ENCODE measurements at regions of chr1 and their contacts with region 1.

Region 1: GRCh38 chr1:167200749-167201148 is 19.9 kb upstream of the POU2F1 start:
- H3K4me3 Mint-ChIP-seq: no peak overlapping the region
- H3K27ac Mint-ChIP-seq: no peak overlapping the region
- H3K4me1 Mint-ChIP-seq: no peaks in the 10 kb centered on the region
- H3K27me3 Mint-ChIP-seq: no peaks in the 10 kb centered on the region

Region 2: GRCh38 chr1:167185974-167186657 is 14.6 kb before region 1 on chr1:
- intact Hi-C with region 1: loop called (anchors 1 kb)
- H3K4me3 Mint-ChIP-seq: no peak overlapping the region
- H3K27ac Mint-ChIP-seq: no peak overlapping the region
- H3K4me1 Mint-ChIP-seq: no peaks in the 10 kb centered on the region
- H3K27me3 Mint-ChIP-seq: no peaks in the 10 kb centered on the region

Region 3: DNA sequence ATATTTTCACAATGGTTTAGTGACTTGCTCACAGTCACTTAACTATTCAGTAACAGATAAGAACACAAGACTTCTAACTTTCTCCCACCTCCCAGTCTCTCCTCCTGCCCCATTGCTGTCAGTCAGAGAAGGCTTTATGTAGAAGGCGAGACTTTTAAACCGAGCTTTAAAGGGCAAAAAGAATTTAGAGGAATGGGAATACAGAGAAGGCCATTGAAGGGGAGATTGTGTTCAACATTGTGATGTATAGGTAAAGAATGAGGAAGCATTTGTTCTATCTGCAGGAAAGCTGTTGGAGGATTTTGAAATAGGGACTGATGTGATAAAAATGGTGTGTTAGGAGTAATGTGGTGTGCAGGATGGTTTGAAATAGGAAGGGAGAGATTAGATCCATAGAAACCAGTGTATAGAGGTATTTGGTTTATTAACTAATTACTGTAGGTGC is 27.2 kb after region 1 on chr1:
- intact Hi-C with region 1: no loop called
- H3K4me3 Mint-ChIP-seq: no peak overlapping the region
- H3K27ac Mint-ChIP-seq: peak overlapping the region; percentile 45
- H3K4me1 Mint-ChIP-seq: peaks cover 54% of the 10 kb centered on the region
- H3K27me3 Mint-ChIP-seq: no peaks in the 10 kb centered on the region

Region 4: GRCh38 chr1:167291539-167292185 is 90.9 kb after region 1 on chr1:
- intact Hi-C with region 1: no loop called
- H3K4me3 Mint-ChIP-seq: no peak overlapping the region
- H3K27ac Mint-ChIP-seq: no peak overlapping the region
- H3K4me1 Mint-ChIP-seq: peaks cover 58% of the 10 kb centered on the region
- H3K27me3 Mint-ChIP-seq: no peaks in the 10 kb centered on the region

Measured in dendritic cell treated with granulocyte-macrophage colony-stimulating factor and Interleukin-4, amounts not matched to agents 40 ng/mL and 50 ng/mL, for 4 days (primary cell).